B cell (primary cell): ENCODE measurements at regions of chr22 and their contacts with region 1.

Region 1: GRCh38 chr22:46013460-46014416 is 36.8 kb upstream of the WNT7B start:
- DNase-seq: peak; percentile 81
- ATAC-seq: peak; percentile 95
- H3K4me3 ChIP-seq: peak overlapping the region; percentile 8 to 88 (median 83)
- H3K4me3 Mint-ChIP-seq: peak overlapping the region; percentile 93
- H3K27ac ChIP-seq: peak overlapping the region; percentile 90 to 91
- H3K27ac Mint-ChIP-seq: peak overlapping the region; percentile 92
- H3K4me1 ChIP-seq: peaks cover 3 to 17% of the 10 kb centered on the region in 2 donors
- H3K4me1 Mint-ChIP-seq: peaks cover 10% of the 10 kb centered on the region
- H3K27me3 ChIP-seq: peaks cover 0 to 3% (median 0%) of the 10 kb centered on the region in 4 experiments
- H3K27me3 Mint-ChIP-seq: no peaks in the 10 kb centered on the region
- CTCF ChIP-seq: peak; percentile 75

Region 2: DNA sequence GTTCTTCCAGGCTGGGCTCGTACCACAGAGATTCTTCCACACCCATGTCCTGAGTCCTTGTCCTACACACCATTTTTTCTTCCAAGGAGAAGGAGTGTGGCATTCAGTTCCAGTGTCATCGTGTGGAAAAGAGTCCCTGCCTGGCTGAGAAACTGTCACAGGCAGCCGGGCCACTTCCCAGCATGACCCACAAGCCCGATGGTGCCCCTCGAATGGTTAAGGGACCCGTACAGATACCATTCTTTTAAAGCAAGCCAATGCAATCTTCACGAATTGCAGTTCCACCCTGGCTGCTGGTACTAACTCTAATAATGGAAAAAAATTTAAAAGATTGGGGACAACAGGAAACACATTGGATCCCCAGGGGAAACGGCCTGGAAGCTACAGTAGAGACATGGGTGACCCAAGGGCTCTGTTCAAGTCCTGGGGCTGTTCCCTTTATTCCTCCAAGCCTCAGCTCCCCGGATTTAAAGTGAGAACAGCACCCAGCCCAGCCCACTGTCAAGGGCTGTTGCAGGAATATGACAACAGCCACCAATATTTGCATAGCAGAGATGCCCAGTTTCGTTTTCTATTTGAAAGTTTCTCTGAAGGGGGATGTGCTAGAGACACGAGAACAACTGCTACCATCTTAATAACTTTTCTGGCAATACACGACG is 44.2 kb after region 1 on chr22:
- CTCF ChIA-PET with region 1: interaction called, 4 read pairs
- POLR2A ChIA-PET with region 1: interaction called, 12 read pairs
- intact Hi-C with region 1: loop called (anchors 5 kb)
- DNase-seq: peak; percentile 83
- ATAC-seq: peak; percentile 70
- H3K4me3 ChIP-seq: peak overlapping the region in 2 of 5 experiments; percentile 18 to 28
- H3K4me3 Mint-ChIP-seq: peak overlapping the region; percentile 62
- H3K27ac ChIP-seq: peak overlapping the region; percentile 57 to 89
- H3K27ac Mint-ChIP-seq: peak overlapping the region; percentile 97
- H3K4me1 ChIP-seq: peaks cover 31 to 49% of the 10 kb centered on the region in 2 donors
- H3K4me1 Mint-ChIP-seq: peaks cover 51% of the 10 kb centered on the region
- H3K27me3 ChIP-seq: no peaks in the 10 kb centered on the region
- H3K27me3 Mint-ChIP-seq: no peaks in the 10 kb centered on the region
- CTCF ChIP-seq: no peak

Region 3: GRCh38 chr22:46071451-46072109 is 57.8 kb after region 1 on chr22:
- CTCF ChIA-PET with region 1: interaction called, 14 read pairs
- POLR2A ChIA-PET with region 1: interaction called, 5 read pairs
- intact Hi-C with region 1: loop called (anchors 1 kb)
- DNase-seq: peak; percentile 72
- ATAC-seq: peak; percentile 7
- H3K4me3 ChIP-seq: peak overlapping the region in 4 of 5 experiments; percentile 31 to 70 (median 66)
- H3K4me3 Mint-ChIP-seq: peak overlapping the region; percentile 89
- H3K27ac ChIP-seq: no peak overlapping the region
- H3K27ac Mint-ChIP-seq: peak overlapping the region; percentile 81
- H3K4me1 ChIP-seq: peaks cover 22 to 29% of the 10 kb centered on the region in 2 donors
- H3K4me1 Mint-ChIP-seq: peaks cover 32% of the 10 kb centered on the region
- H3K27me3 ChIP-seq: peaks cover 0 to 2% (median 0%) of the 10 kb centered on the region in 4 experiments
- H3K27me3 Mint-ChIP-seq: peaks cover 4% of the 10 kb centered on the region
- CTCF ChIP-seq: no peak

Region 4: GRCh38 chr22:46150034-46150654 is 136.4 kb after region 1 on chr22 and contains the start of gene PPARA:
- CTCF ChIA-PET with region 1: interaction called, 3 read pairs
- POLR2A ChIA-PET with region 1: interaction called, 3 read pairs
- intact Hi-C with region 1: loop called (anchors 1 kb)
- DNase-seq: peak; percentile 89
- ATAC-seq: peak; percentile 84
- H3K4me3 ChIP-seq: peak within 1 kb of the TSS; percentile 53 to 88 (median 72)
- H3K4me3 Mint-ChIP-seq: peak within 1 kb of the TSS; percentile 88
- H3K27ac ChIP-seq: peak within 1 kb of the TSS; percentile 60 to 69
- H3K27ac Mint-ChIP-seq: peak within 1 kb of the TSS; percentile 84
- H3K4me1 ChIP-seq: peaks cover 12 to 23% of the 10 kb centered on the region in 2 donors
- H3K4me1 Mint-ChIP-seq: peaks cover 21% of the 10 kb centered on the region
- H3K27me3 ChIP-seq: no peaks in the 10 kb centered on the region
- H3K27me3 Mint-ChIP-seq: no peaks in the 10 kb centered on the region
- CTCF ChIP-seq: no peak
- total RNA-seq, gene PPARA: 28.3 and 29.8 TPM in 2 replicates